ENCODE measurements at regions of chr12 and their contacts with region 1.

Region 1: GRCh38 chr12:94101738-94102660 is 46.4 kb upstream of the PLXNC1 start:
- DNase-seq: peak; percentile 91
- H3K4me3 Mint-ChIP-seq: peak overlapping the region; percentile 75
- H3K27ac Mint-ChIP-seq: peak overlapping the region; percentile 35
- H3K4me1 Mint-ChIP-seq: peaks cover 24% of the 10 kb centered on the region
- H3K27me3 Mint-ChIP-seq: no peaks in the 10 kb centered on the region

Region 2: GRCh38 chr12:93098077-93098476 is 1003.9 kb before region 1 on chr12:
- CTCF ChIA-PET with region 1: interaction called, 6 read pairs
- POLR2A ChIA-PET with region 1: no interaction called
- intact Hi-C with region 1: loop called (anchors 5 kb)
- DNase-seq: peak; percentile 75
- H3K4me3 Mint-ChIP-seq: no peak overlapping the region
- H3K27ac Mint-ChIP-seq: no peak overlapping the region
- H3K4me1 Mint-ChIP-seq: peaks cover 9% of the 10 kb centered on the region
- H3K27me3 Mint-ChIP-seq: no peaks in the 10 kb centered on the region

Region 3: GRCh38 chr12:93494096-93494495 is 607.9 kb before region 1 on chr12:
- CTCF ChIA-PET with region 1: interaction called, 11 read pairs
- POLR2A ChIA-PET with region 1: no interaction called
- intact Hi-C with region 1: no loop called
- DNase-seq: no peak
- H3K4me3 Mint-ChIP-seq: no peak overlapping the region
- H3K27ac Mint-ChIP-seq: no peak overlapping the region
- H3K4me1 Mint-ChIP-seq: peaks cover 13% of the 10 kb centered on the region
- H3K27me3 Mint-ChIP-seq: no peaks in the 10 kb centered on the region

Region 4: DNA sequence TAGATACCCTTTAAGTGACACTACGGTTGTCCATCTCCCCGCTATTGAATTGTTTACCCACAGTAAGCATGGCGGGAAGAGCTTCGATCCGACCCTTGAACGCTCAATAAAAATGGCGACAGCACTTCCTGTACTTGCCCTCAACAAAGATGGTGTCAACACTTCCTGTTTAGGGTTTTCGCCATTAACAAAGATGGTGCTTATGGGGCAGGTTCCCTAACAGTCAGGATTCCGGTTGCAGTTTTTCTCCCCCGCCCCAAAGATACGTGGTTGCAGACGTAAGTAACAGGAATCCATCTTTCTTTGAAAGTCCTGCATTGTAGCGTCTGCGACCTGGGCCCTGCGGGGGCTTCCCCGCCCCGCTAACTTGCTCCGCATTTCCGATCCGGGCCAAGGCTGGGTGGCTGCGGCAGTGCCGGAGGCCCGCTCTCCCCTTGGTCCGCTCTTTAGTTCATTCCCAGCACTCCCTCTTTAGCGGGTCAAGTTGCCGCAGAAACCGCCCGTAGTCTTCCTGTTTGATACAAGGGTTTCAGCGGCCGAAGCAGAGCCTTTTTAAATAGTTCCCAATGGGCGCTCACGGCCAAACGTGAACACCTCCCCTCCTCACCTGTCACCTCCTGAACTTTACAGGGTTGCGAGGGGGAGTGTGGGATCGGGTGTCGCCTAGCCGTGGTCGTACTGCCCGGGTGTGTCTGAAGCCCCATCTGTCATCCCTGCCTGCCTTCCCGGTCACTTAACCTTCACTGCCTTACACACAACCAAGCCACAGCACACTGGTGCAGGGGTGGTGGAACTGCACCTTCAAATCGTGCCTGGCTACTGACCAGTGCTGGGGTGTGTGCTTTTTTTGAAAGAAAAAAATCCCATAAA is 424.6 kb before region 1 on chr12 and contains the start of gene CRADD:
- CTCF ChIA-PET with region 1: interaction called, 13 read pairs
- POLR2A ChIA-PET with region 1: no interaction called
- intact Hi-C with region 1: loop called (anchors 1 kb)
- DNase-seq: peak; percentile 90
- H3K4me3 Mint-ChIP-seq: peak within 1 kb of the TSS; percentile 93
- H3K27ac Mint-ChIP-seq: peak within 1 kb of the TSS; percentile 100
- H3K4me1 Mint-ChIP-seq: peaks cover 41% of the 10 kb centered on the region
- H3K27me3 Mint-ChIP-seq: peaks cover 11% of the 10 kb centered on the region
- total RNA-seq, gene CRADD: 8.9 to 10.4 TPM

Region 5: DNA sequence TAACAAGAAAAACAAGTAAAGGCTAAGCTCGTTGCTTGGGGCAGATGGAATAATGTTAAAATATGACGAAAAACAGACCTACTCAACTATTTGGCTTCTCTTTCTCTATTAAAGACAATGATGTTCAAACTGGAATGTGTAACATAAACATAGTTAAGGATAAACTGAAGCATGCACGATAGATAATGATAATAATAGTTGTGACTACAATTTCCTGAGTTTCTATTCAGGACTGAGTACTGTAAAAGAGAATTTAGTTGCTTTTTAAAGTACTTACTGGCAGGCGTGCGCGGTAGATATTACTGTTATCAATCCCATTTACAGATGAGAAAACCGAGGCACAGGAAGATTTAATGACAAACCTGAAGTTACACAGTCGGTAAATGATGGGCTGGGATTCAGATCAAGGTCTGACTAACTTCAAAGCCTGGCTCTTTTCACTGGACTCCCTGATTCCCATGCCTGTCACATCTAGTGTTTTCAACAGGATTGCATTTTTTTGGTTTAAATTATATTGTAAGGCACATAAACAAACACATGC is 321.8 kb before region 1 on chr12:
- CTCF ChIA-PET with region 1: interaction called, 15 read pairs
- POLR2A ChIA-PET with region 1: no interaction called
- intact Hi-C with region 1: loop called (anchors 5 kb)
- DNase-seq: no peak
- H3K4me3 Mint-ChIP-seq: no peak overlapping the region
- H3K27ac Mint-ChIP-seq: no peak overlapping the region
- H3K4me1 Mint-ChIP-seq: peaks cover 48% of the 10 kb centered on the region
- H3K27me3 Mint-ChIP-seq: no peaks in the 10 kb centered on the region

Region 6: DNA sequence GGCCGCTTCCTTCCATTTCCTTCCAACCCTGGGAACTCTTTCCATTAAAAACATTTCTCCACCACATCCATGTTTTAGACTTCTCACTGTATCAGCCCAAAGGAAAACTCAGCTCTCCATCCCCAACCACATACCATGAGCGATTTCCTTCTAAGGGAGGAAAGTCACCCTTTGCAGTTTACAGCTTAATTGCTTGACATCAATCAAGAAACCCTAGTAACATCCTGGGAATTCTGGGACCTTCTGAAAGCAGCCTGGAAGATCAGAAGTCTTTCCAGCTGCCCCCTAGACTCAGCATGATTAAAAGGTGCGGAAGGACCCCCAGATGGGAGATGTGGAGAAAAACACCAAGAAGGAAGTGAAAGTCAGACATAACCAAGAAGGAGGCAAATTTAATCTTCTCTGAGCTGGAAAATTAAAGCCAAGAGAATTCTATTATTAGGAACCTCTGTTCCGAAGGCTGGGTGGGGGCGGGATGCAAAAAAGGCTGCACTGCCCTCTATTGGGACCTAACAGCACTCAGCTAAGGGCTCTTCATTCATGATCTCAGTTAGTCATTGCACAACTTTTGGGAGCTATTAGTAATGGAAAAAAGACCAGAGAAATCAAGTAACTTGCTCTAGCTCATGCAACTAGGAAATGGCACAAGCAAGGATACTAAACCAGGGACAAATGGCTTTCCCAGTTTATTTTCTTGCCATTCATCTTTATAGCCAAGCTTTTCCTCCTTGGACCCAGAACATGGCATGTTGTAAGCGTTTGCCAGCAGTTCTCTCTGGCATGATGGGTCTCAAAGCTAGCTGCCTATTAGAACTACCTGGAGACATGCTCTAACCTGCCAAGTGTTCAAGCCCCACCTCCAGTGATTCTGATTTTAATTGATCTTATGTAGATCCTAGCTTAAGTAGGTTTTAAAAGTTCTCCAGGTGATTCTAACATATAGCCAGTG is 26.7 kb before region 1 on chr12:
- CTCF ChIA-PET with region 1: interaction called, 69 read pairs
- POLR2A ChIA-PET with region 1: interaction called, 3 read pairs
- intact Hi-C with region 1: no loop called
- DNase-seq: peak; percentile 24
- H3K4me3 Mint-ChIP-seq: no peak overlapping the region
- H3K27ac Mint-ChIP-seq: no peak overlapping the region
- H3K4me1 Mint-ChIP-seq: peaks cover 16% of the 10 kb centered on the region
- H3K27me3 Mint-ChIP-seq: peaks cover 8% of the 10 kb centered on the region